ENCODE measurements at regions of chr10 and their contacts with region 1.

Region 1: DNA sequence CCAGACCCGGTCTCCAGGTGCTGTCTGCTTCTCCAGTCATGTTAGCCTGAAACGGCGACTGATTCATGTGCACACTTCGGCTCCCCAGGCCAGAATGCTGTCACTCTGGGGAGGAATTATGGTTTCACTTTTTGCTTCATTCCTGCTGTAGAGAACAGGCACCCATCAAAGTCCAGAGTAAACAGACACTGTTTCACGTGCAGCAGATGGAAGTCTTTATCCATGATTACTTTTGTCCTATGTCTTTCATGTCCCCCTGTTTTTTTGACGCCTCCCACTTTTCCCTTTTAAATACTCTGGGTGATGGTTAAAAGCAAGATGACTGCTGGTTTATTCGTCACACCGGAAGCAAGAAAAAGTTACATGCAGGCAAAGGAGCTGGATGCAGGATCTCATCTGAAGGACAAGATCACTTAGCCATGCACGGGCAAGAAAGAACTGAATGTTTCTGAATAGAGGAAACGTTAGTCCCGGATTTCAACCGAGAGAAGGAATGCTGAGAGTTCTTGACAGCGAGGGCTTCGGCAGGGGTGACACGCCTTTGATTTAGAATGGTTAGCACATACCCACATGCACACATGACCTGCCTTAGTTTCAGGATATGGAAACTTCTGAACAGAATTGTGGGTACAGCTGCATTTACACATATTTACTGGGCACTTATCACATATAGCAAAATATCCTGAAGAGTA is 250.0 kb upstream of the KLF6 start:
- DNase-seq: peak; percentile 11
- H3K4me3 Mint-ChIP-seq: peak overlapping the region; percentile 61
- H3K27ac Mint-ChIP-seq: peak overlapping the region; percentile 66
- H3K4me1 Mint-ChIP-seq: peaks cover 36% of the 10 kb centered on the region
- H3K27me3 Mint-ChIP-seq: no peaks in the 10 kb centered on the region

Region 2: GRCh38 chr10:3095373-3096139 is 939.5 kb before region 1 on chr10:
- intact Hi-C with region 1: loop called (anchors 10 kb)
- DNase-seq: peak; percentile 57
- H3K4me3 Mint-ChIP-seq: peak overlapping the region; percentile 69
- H3K27ac Mint-ChIP-seq: peak overlapping the region; percentile 97
- H3K4me1 Mint-ChIP-seq: peaks cover 70% of the 10 kb centered on the region
- H3K27me3 Mint-ChIP-seq: no peaks in the 10 kb centered on the region

Region 3: DNA sequence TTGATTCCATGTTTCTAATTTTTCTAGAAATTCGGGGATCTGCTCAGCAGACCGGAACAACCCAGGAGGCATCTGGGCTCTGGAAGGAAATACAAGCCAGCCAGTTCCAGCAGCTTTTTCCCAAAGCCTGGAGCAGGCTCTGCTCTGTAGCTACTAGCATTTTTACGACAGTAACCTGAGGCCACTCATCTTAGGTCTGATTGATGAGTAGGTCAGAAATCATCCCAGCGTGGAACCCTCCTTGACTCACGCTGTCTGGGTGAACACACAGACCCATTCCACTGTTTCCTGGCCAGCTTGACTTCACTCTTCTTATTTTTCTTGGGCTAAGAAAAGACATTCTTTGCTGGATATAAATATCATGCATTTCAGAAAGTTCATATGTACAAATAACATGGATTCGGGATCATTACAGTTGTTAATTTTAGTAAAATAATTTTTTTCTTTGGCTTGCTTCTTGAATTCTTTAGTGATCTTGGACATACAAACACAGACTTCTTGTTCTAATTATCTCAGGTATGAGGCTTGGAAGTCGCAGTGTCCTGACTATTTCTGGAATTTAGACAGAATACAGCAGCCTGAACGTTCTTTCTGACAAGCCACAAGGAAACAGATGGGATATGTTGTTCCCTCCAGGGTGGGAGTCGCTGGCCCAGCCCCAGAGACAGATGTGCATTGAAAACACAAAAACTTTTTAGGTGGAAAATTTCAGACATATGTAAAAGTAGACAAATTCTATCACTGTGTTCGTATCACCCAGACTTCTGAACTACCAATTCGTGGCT is 807.9 kb before region 1 on chr10:
- intact Hi-C with region 1: loop called (anchors 10 kb)
- DNase-seq: no peak
- H3K4me3 Mint-ChIP-seq: no peak overlapping the region
- H3K27ac Mint-ChIP-seq: no peak overlapping the region
- H3K4me1 Mint-ChIP-seq: peaks cover 18% of the 10 kb centered on the region
- H3K27me3 Mint-ChIP-seq: peaks cover 18% of the 10 kb centered on the region

Region 4: DNA sequence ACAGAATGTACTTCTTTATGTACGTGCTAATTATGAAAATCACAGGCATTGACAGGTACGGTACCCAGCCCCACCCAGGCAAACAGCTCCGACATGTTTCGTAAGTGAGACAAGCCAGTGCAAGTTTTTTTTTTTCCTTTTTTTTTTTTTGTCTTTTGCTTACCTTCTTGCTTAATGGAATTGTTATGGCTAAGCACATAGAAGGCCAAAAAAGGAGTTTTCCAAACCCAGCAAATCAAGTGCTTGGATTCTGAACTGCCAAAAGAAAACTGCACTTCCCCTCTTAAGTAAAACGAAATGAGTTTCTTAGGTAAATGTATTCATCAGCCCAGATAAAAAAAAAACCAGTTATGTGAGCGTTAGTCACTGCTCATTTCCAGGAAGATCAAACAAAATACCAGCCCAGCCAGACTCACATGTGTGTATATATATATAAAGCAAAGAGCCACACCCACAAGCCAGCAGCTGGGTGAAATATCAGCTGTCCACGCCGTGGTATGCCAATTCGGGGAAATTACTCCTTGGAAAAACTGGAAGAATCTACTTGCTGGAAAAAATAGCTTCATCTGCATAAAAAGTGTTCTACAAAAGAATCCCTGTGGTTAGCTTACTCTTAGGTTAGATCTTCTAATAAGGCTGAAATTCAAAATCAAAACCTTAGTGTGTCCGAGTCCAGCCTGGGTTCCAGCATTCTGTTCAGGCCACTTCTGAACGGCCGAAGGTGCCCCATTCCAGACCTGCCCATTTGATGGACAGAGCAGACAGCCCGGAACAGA is 258.1 kb before region 1 on chr10:
- intact Hi-C with region 1: loop called (anchors 2 kb)
- DNase-seq: peak; percentile 60
- H3K4me3 Mint-ChIP-seq: peak overlapping the region; percentile 37
- H3K27ac Mint-ChIP-seq: peak overlapping the region; percentile 53
- H3K4me1 Mint-ChIP-seq: peaks cover 81% of the 10 kb centered on the region
- H3K27me3 Mint-ChIP-seq: no peaks in the 10 kb centered on the region

Region 5: GRCh38 chr10:3866332-3866731 is 168.7 kb before region 1 on chr10:
- intact Hi-C with region 1: no loop called
- DNase-seq: no peak
- H3K4me3 Mint-ChIP-seq: no peak overlapping the region
- H3K27ac Mint-ChIP-seq: peak overlapping the region; percentile 77
- H3K4me1 Mint-ChIP-seq: peaks cover 58% of the 10 kb centered on the region
- H3K27me3 Mint-ChIP-seq: no peaks in the 10 kb centered on the region

Region 6: GRCh38 chr10:3972460-3973301 is 62.4 kb before region 1 on chr10:
- intact Hi-C with region 1: loop called (anchors 2 kb)
- DNase-seq: peak; percentile 42
- H3K4me3 Mint-ChIP-seq: peak overlapping the region; percentile 79
- H3K27ac Mint-ChIP-seq: peak overlapping the region; percentile 98
- H3K4me1 Mint-ChIP-seq: peaks cover 42% of the 10 kb centered on the region
- H3K27me3 Mint-ChIP-seq: no peaks in the 10 kb centered on the region

Region 7: DNA sequence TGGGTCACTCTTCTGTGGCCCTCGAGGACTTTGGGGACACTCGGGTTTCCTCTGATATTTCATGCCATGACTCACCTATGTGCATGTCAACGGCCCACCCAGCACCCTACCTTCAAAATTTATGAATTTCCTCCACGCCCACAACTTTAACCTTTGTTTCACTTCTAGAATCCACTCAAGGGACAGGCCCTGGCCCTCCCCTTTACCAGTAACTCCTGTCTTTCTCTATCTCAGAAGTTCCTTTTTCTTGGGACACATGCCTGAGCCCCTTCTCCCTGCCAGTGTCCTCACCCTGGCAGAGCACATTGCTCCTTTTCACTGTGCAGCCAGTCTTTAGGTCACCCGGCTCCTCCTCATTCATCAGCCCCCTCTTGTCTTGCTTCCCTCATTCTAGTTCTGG is 32.5 kb after region 1 on chr10:
- intact Hi-C with region 1: loop called (anchors 1 kb)
- DNase-seq: no peak
- H3K4me3 Mint-ChIP-seq: no peak overlapping the region
- H3K27ac Mint-ChIP-seq: no peak overlapping the region
- H3K4me1 Mint-ChIP-seq: no peaks in the 10 kb centered on the region
- H3K27me3 Mint-ChIP-seq: no peaks in the 10 kb centered on the region

Region 8: GRCh38 chr10:4344511-4344994 is 309.5 kb after region 1 on chr10:
- intact Hi-C with region 1: loop called (anchors 1 kb)
- DNase-seq: no peak
- H3K4me3 Mint-ChIP-seq: no peak overlapping the region
- H3K27ac Mint-ChIP-seq: peak overlapping the region; percentile 6
- H3K4me1 Mint-ChIP-seq: peaks cover 15% of the 10 kb centered on the region
- H3K27me3 Mint-ChIP-seq: peaks cover 4% of the 10 kb centered on the region

Region 9: GRCh38 chr10:4498711-4499251 is 463.7 kb after region 1 on chr10:
- intact Hi-C with region 1: no loop called
- DNase-seq: no peak
- H3K4me3 Mint-ChIP-seq: no peak overlapping the region
- H3K27ac Mint-ChIP-seq: no peak overlapping the region
- H3K4me1 Mint-ChIP-seq: no peaks in the 10 kb centered on the region
- H3K27me3 Mint-ChIP-seq: peaks cover 11% of the 10 kb centered on the region

Measured in activated T-helper 1 cell treated with anti-CD3 and anti-CD28 coated beads, Interleukin-12 subunit alpha, Interleukin-12 subunit beta, Interleukin-2, Interleukin-4 antibody, amounts not matched to agents 30 ng/mL and 10 ng/mL and 1 ng/mL, durations not matched to agents 14 hours and 24 hours and 36 hours (primary cell).